ENCODE measurements at regions of chr12 and their contacts with region 1.

Region 1: GRCh38 chr12:7995266-7995963 is 37.1 kb upstream of the FOXJ2 start:
- DNase-seq: peak; percentile 84 to 95
- H3K4me3 ChIP-seq: no peak overlapping the region
- CTCF ChIP-seq: peak in 1 of 3 donors; percentile 74
- POLR2A ChIP-seq: no peak

Region 2: GRCh38 chr12:7859552-7859951 is 135.9 kb before region 1 on chr12:
- intact Hi-C with region 1: loop called (anchors 5 kb)
- DNase-seq: no peak
- H3K4me3 ChIP-seq: no peak overlapping the region
- CTCF ChIP-seq: no peak
- POLR2A ChIP-seq: no peak

Region 3: DNA sequence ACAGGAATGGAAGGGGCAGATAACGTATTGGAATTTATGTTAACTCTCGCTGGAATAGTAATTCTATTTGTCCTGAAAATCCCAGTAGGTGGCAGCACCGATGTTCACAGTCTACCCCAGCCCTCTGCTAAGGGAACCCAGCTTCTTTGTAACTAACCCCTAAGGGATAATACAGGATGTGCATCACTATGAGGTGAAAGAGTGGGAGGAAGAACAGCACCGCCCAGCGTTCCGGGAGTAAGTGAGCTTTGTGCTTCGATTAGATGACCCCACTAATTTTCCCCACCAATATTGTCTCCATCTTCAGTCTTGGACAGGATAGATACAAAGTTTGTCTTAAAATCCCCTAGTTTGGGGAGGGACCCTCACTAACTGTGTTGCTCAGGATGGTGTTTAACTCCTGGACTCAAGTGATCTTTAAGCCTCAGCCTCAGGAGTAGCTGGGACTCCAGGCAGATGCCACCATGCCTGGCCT is 62.1 kb before region 1 on chr12:
- intact Hi-C with region 1: loop called (anchors 10 kb)
- DNase-seq: peak; percentile 77 to 93
- H3K4me3 ChIP-seq: no peak overlapping the region
- CTCF ChIP-seq: peak in 1 of 3 donors; percentile 52
- POLR2A ChIP-seq: no peak